Heart left ventricle (tissue), 16 donors: ENCODE measurements at regions of chr6 and their contacts with region 1.

Region 1: GRCh38 chr6:111861431-111861885 is 11.8 kb downstream of the FYN start:
- DNase-seq: no peak
- ATAC-seq: peak in 1 of 4 donors; percentile 22
- H3K4me3 ChIP-seq: no peak overlapping the region
- H3K27ac ChIP-seq: no peak overlapping the region
- H3K4me1 ChIP-seq: peaks cover 0 to 87% (median 41%) of the 10 kb centered on the region in 12 donors
- H3K27me3 ChIP-seq: no peaks in the 10 kb centered on the region
- CTCF ChIP-seq: no peak
- POLR2A ChIP-seq: no peak

Region 2: GRCh38 chr6:111113336-111114086 is 747.9 kb before region 1 on chr6:
- intact Hi-C with region 1: no loop called
- DNase-seq: peak; percentile 32 to 66 (median 59)
- ATAC-seq: peak; percentile 79 to 94 (median 93)
- H3K4me3 ChIP-seq: peak overlapping the region in 1 of 12 donors; percentile 3
- H3K27ac ChIP-seq: peak overlapping the region in 11 of 12 donors; percentile 11 to 91 (median 58)
- H3K4me1 ChIP-seq: peaks cover 0 to 28% (median 8%) of the 10 kb centered on the region in 12 donors
- H3K27me3 ChIP-seq: no peaks in the 10 kb centered on the region
- CTCF ChIP-seq: no peak
- POLR2A ChIP-seq: no peak

Region 3: DNA sequence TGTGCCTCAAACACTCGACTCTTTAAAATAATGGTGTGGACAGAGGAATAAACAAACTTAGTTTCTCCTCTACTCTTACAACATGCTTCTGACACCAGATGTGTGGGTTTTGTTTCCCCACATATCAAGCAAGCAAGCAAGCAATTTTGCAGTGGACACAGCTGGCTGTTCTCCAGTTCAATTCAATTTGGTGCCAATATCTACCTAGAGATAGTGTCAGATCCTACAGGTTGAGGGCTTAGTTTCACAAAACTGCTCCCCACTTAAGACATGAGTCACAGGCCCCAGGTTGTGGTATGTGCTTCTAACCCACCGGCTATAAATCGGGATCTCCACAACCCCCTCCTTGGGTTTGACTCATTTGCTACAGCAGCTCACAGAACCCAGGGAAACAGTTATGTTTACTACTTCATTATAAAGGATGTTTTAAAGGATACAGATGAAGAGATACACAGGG is 124.4 kb before region 1 on chr6:
- intact Hi-C with region 1: loop called in 1 of 10 experiments (anchors 10 kb)
- DNase-seq: no peak
- ATAC-seq: peak in 1 of 4 donors; percentile 27
- H3K4me3 ChIP-seq: no peak overlapping the region
- H3K27ac ChIP-seq: peak overlapping the region in 1 of 12 donors; percentile 18
- H3K4me1 ChIP-seq: peaks cover 0 to 70% (median 16%) of the 10 kb centered on the region in 12 donors
- H3K27me3 ChIP-seq: no peaks in the 10 kb centered on the region
- CTCF ChIP-seq: no peak
- POLR2A ChIP-seq: no peak